CD8-positive, alpha-beta T cell (primary cell): ENCODE measurements at regions of chr5 and their contacts with region 1.

Region 1: GRCh38 chr5:181159286-181159829 is 12.0 kb downstream of the OR2V2 start:
- DNase-seq: peak; percentile 87 to 96 (median 91)
- ATAC-seq: peak; percentile 60
- H3K4me3 ChIP-seq: no peak overlapping the region
- H3K4me3 Mint-ChIP-seq: peak overlapping the region; percentile 68
- H3K27ac ChIP-seq: peak overlapping the region; percentile 78 to 99
- H3K27ac Mint-ChIP-seq: peak overlapping the region; percentile 91
- H3K4me1 ChIP-seq: peaks cover 22% of the 10 kb centered on the region
- H3K4me1 Mint-ChIP-seq: peaks cover 20% of the 10 kb centered on the region
- H3K27me3 ChIP-seq: no peaks in the 10 kb centered on the region
- H3K27me3 Mint-ChIP-seq: peaks cover 9% of the 10 kb centered on the region
- CTCF ChIP-seq: peak; percentile 88

Region 2: DNA sequence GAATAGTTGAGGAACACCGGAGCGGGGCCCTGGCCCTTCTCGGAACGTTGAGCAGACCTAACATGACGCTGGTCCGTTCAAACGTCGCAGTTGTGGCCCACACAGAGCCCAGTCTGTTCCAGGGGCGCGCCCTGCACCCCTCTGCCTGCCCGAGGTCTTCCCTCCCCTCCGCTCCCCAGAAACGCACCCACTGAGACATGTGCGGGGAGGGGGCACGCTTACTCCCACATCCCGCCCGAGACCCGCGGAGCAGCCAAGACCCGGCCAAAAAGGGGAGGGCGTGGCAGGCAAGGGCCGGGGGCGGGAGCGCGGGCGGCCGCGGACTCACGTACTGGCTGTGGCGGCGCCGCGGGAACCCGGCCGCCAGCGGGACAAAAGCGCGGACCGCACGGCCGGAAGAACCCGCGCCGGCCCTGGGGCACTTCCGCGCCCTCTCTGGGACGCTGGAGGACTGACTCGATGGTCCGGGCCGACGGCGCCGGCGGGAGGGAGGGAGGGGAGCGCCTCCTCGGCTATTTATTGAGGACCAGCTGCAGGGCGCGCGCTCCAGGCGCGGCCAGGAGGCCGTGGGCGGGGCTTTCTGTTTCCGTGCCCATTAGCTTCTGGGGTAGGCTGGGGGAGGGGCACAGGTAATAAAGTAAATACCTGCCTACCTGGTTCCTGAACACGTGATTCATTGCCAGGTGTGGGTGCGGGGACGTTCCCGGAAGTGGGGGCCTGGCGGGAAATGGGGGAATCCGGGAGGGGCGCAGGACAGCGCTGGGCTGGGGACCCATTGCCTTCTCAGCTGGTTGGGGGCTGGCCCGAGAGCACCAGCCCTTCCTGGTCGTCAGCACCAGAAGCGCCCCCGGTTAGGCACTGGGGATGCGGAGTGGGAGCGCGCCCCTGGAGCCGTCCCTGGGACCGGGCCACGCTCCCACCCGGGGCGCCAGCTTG is 298.2 kb before region 1 on chr5 and contains the start of gene ZFP62:
- CTCF ChIA-PET with region 1: no interaction called
- POLR2A ChIA-PET with region 1: no interaction called
- intact Hi-C with region 1: loop called (anchors 2 to 5 kb)
- DNase-seq: peak; percentile 81 to 94 (median 86)
- ATAC-seq: peak; percentile 71
- H3K4me3 ChIP-seq: peak within 1 kb of the TSS; percentile 79 to 86
- H3K4me3 Mint-ChIP-seq: peak within 1 kb of the TSS; percentile 94
- H3K27ac ChIP-seq: peak within 1 kb of the TSS; percentile 65 to 85
- H3K27ac Mint-ChIP-seq: peak within 1 kb of the TSS; percentile 96
- H3K4me1 ChIP-seq: no peaks in the 10 kb centered on the region
- H3K4me1 Mint-ChIP-seq: peaks cover 29% of the 10 kb centered on the region
- H3K27me3 ChIP-seq: no peaks in the 10 kb centered on the region
- H3K27me3 Mint-ChIP-seq: no peaks in the 10 kb centered on the region
- CTCF ChIP-seq: peak; percentile 8
- total RNA-seq, gene ZFP62: 13.7 to 13.9 TPM

Region 3: DNA sequence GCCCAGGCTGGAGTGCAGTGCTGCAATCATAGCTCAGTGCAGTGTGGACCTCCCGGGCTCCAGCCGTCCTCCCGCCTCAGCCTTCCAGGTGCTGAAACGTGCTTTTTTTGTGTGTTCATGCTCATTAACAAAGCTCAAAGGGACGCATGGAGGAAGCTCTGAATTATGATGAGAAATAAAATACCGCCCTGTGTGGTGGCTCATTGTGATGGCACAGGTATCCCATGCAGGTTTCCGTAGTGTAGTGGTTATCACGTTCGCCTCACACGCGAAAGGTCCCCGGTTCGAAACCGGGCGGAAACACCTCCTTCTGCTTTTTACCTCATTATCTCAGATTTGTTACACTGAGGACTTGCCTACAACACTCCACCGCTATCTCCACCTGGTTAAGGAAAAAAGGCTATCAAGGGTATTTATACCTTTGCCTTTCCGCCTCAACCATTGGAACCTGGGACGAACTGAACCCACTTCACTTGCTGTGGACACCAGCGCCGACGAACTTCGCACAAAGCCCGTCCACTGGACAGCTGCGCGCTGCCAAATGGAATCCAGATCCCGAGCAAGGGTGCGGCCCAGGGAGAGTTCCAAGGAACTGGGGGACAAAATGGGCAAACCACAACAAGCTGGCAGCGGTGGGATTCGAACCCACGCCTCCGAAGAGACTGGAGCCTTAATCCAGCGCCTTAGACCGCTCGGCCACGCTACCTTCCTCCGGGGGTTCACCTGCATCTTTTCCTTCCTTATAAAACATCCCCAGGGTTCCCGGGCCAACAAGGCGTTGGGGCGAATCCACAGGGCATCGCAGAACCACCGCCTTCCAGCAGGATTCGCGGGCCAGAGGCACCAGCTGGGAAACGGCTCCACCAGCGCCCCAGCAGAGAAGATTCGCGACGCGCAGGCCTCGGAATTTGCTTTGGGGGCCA is 14.3 kb after region 1 on chr5:
- CTCF ChIA-PET with region 1: interaction called, 16 read pairs
- POLR2A ChIA-PET with region 1: interaction called, 3 read pairs
- intact Hi-C with region 1: no loop called
- DNase-seq: peak in 8 of 9 experiments; percentile 16 to 81 (median 56)
- ATAC-seq: peak; percentile 82
- H3K4me3 ChIP-seq: peak overlapping the region; percentile 12 to 39
- H3K4me3 Mint-ChIP-seq: peak overlapping the region; percentile 80
- H3K27ac ChIP-seq: peak overlapping the region in 1 of 2 experiments; percentile 15
- H3K27ac Mint-ChIP-seq: peak overlapping the region; percentile 72
- H3K4me1 ChIP-seq: peaks cover 14% of the 10 kb centered on the region
- H3K4me1 Mint-ChIP-seq: peaks cover 32% of the 10 kb centered on the region
- H3K27me3 ChIP-seq: peaks cover 0 to 22% of the 10 kb centered on the region in 2 experiments
- H3K27me3 Mint-ChIP-seq: peaks cover 47% of the 10 kb centered on the region
- CTCF ChIP-seq: no peak

Region 4: DNA sequence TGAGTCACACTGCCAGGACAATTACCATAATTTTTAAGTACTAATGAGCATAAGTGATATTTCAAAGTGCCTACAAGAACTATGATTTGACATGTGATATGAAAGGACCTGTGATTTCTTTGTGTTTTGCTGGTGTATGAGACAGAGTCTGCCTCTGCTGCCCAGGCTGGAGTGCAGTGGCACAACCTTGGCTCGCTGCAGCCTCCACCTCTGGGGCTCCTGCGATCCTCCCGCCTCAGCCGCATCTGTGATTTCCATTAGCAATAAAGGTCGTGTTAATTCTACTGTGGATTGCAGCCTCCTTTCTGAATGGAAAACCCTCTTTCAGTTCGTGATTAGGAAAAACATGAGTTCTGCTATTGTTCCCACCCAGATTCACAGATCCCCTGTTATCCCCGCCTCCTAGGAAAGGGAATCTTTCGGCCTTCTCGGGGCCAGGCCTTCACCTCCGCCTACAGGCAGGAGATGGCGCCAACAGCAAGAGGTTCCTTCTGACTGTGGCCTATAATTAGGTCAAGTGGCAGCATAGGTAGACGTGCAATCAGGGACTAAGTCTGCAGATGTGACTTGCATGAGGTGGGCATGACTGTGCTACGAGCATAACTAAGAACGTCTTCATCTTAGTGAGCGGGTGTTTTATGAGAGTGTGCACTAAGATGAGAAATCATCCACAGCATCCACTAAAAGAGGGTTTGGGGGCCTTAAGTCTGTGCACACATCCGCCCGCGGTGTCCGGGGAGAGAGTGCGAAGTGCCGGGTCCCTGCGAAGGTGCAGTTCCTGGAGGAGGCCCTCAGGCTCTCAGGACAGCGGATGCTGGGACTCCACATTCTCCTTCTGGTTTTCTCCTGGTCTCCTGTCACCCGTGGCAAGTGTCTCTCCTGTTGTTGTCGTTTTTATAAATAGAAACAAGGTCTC is 22.6 kb after region 1 on chr5:
- CTCF ChIA-PET with region 1: interaction called, 17 read pairs
- POLR2A ChIA-PET with region 1: no interaction called
- intact Hi-C with region 1: loop called (anchors 1 kb)
- DNase-seq: peak in 8 of 9 experiments; percentile 49 to 88 (median 73)
- ATAC-seq: peak; percentile 77
- H3K4me3 ChIP-seq: no peak overlapping the region
- H3K4me3 Mint-ChIP-seq: peak overlapping the region; percentile 83
- H3K27ac ChIP-seq: peak overlapping the region in 1 of 2 experiments; percentile 55
- H3K27ac Mint-ChIP-seq: peak overlapping the region; percentile 76
- H3K4me1 ChIP-seq: peaks cover 13% of the 10 kb centered on the region
- H3K4me1 Mint-ChIP-seq: peaks cover 31% of the 10 kb centered on the region
- H3K27me3 ChIP-seq: no peaks in the 10 kb centered on the region
- H3K27me3 Mint-ChIP-seq: peaks cover 2% of the 10 kb centered on the region
- CTCF ChIP-seq: peak; percentile 79

Region 5: DNA sequence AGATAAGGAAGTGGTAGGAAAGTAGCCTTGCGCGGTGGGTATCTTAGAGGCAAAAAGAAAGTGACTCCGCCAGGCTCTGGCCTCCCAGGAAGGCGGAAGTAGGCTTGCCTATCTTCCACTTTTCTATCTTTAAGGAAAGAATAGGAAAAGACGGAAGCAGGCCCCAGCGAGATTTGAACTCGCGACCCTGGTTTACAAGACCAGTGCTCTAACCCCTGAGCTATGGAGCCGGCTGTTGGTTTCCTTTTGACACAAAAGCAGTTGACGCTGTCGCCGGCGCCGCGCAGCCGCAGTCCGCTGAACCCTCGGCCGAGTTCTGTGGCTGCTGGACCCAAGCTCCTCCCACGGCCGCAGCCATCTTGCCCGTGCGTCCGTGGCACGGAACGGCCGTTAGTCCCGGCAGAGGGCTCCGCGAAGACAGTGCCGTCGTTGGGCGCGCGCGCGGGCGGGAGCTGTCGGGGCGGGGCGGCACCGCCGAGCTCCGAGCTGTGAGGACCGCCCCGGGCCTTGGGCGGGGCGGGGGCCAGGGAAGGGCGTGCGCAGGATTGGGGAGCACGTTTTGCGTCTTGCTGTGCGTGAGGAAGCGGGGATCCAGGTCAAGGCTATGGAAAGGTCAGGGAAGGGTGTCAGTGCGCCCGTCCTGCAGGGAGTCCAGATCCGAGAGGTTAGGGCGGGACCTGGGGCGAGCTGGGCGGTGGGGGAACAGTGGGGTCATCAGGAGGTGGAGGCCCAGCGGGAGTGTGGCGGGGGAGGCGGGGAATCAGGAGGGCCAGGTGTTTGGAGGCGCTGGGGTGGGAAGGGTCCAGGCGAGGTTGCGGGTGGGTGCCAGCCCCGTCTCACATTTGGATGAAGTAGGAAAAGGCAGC is 32.4 kb after region 1 on chr5:
- CTCF ChIA-PET with region 1: interaction called, 4 read pairs
- POLR2A ChIA-PET with region 1: interaction called, 3 read pairs
- intact Hi-C with region 1: loop called in 1 of 2 experiments (anchors 1 kb)
- DNase-seq: peak; percentile 90 to 99 (median 96)
- ATAC-seq: peak; percentile 50
- H3K4me3 ChIP-seq: peak overlapping the region; percentile 88 to 90
- H3K4me3 Mint-ChIP-seq: peak overlapping the region; percentile 98
- H3K27ac ChIP-seq: peak overlapping the region; percentile 74 to 78
- H3K27ac Mint-ChIP-seq: peak overlapping the region; percentile 95
- H3K4me1 ChIP-seq: peaks cover 7% of the 10 kb centered on the region
- H3K4me1 Mint-ChIP-seq: peaks cover 23% of the 10 kb centered on the region
- H3K27me3 ChIP-seq: no peaks in the 10 kb centered on the region
- H3K27me3 Mint-ChIP-seq: no peaks in the 10 kb centered on the region
- CTCF ChIP-seq: no peak

Region 6: DNA sequence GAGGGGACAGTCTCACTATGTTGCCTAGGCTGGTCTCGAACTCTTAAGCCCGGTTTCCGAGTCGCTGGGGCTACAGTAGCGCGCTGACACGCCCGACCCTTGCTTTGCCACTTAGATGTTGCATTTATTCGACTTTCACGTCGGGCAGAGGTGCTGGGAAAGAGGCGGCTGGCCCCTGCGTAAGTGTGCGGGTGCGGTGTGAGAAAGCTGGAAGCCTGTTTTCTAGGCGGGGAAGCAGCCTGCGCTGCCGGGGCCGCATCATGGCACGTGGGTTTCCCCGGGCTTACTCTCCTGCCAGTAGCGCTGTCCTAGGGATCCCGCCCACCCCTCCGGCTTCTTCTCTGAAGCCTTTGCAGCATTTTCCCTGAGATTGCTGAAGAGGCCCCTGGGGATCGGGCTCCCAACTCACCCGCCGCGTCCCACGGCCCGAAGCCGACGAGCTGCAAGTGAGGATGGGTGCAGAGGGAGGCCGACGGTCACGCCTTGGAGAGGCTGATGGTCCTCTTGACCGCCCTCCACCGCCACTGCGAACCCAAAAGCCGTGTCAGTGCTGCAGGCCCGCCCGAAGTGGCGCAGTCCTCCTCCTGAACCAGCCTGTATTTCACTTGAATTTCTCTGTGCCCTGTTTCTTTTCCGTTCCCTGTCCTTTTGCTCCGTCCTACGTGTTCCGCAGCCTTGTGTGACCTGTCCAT is 57.9 kb after region 1 on chr5:
- CTCF ChIA-PET with region 1: no interaction called
- POLR2A ChIA-PET with region 1: no interaction called
- intact Hi-C with region 1: loop called in 1 of 2 experiments (anchors 2 kb)
- DNase-seq: peak in 8 of 9 experiments; percentile 43 to 88 (median 73)
- ATAC-seq: peak; percentile 37
- H3K4me3 ChIP-seq: peak overlapping the region; percentile 61 to 76
- H3K4me3 Mint-ChIP-seq: peak overlapping the region; percentile 97
- H3K27ac ChIP-seq: peak overlapping the region; percentile 44 to 70
- H3K27ac Mint-ChIP-seq: peak overlapping the region; percentile 96
- H3K4me1 ChIP-seq: peaks cover 26% of the 10 kb centered on the region
- H3K4me1 Mint-ChIP-seq: peaks cover 46% of the 10 kb centered on the region
- H3K27me3 ChIP-seq: no peaks in the 10 kb centered on the region
- H3K27me3 Mint-ChIP-seq: no peaks in the 10 kb centered on the region
- CTCF ChIP-seq: no peak